B cell (primary cell): ENCODE measurements at regions of chr11 and their contacts with region 1.

Region 1: DNA sequence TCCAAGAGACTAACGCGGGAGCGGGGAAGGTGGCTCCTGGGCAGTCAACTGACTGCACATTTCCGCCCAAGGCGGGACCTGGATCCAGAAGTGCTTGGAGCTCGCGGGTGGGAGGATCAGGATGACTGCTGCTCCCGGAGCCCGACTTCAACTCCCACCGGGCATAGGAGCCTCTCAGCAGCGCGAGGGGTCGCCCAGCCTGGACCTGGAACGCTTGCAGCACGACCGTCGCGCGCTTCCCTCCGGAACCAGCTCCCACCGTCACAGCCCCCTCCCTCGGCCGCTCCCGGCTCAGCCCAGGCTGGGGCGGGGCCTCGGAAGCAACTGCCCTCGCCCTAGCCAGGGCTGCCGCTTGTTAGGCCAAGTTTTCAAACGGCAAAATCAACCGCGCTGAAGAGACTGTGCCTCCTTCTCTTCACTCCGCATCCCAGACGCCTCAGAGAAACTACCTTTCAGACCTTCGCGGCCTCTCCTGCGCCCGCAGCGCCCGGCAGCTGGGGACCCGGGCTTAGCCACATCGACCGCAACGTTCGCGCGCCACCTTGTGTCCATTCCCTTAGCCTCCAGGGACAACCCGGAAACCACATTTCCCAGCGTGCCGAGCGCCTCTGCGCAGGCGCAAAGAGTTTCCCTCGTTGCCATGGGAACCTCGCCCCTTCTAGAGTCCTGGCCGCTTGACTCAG is 14.0 kb downstream of the SSH3 start:
- DNase-seq: peak; percentile 99
- ATAC-seq: peak; percentile 83
- H3K4me3 ChIP-seq: peak overlapping the region; percentile 77 to 92 (median 87)
- H3K4me3 Mint-ChIP-seq: peak overlapping the region; percentile 89
- H3K27ac ChIP-seq: peak overlapping the region; percentile 46 to 78
- H3K27ac Mint-ChIP-seq: peak overlapping the region; percentile 97
- H3K4me1 ChIP-seq: peaks cover 22 to 33% of the 10 kb centered on the region in 2 donors
- H3K4me1 Mint-ChIP-seq: peaks cover 21% of the 10 kb centered on the region
- H3K27me3 ChIP-seq: no peaks in the 10 kb centered on the region
- H3K27me3 Mint-ChIP-seq: no peaks in the 10 kb centered on the region
- CTCF ChIP-seq: peak; percentile 81

Region 2: DNA sequence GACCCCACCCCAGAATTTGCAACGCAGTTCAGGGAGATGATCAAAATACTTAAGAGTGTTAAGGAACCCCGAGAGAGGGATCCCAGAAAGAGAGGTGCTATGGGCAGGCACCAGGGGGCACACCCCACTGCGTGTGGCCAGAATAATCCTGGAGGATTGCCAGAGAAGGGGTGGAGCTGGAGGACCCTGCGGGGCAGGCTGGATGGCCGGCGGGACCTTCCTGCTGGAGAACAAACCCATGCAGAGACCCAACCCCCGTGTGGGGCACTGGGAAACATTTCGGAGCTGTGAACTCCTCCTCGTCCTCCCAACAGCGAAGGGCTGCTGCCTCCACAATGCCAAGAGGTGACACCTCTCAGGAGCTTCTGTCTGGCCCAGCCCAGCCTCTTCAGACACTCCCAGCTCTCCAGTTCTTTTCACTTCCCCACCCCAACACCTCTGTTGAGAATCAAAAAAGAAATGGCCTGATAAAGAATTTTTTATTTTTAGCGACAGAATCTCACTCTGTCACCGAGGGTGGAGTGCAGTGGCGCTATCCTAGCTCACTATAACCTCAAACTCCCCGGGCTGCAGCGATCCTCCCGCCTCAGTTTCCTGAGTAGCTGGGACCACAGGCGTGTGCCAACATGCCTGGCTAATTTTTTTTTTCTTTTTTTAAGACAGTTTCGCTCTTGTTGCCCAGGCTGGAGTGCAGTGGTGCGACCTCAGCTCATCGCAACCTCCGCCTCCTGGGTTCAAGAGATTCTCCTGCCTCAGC is 235.1 kb before region 1 on chr11:
- CTCF ChIA-PET with region 1: interaction called, 12 read pairs
- POLR2A ChIA-PET with region 1: no interaction called
- intact Hi-C with region 1: loop called (anchors 1 kb)
- DNase-seq: peak; percentile 43
- ATAC-seq: no peak
- H3K4me3 ChIP-seq: peak overlapping the region in 1 of 5 experiments; percentile 33
- H3K4me3 Mint-ChIP-seq: peak overlapping the region; percentile 54
- H3K27ac ChIP-seq: no peak overlapping the region
- H3K27ac Mint-ChIP-seq: no peak overlapping the region
- H3K4me1 ChIP-seq: peaks cover 11 to 12% of the 10 kb centered on the region in 2 donors
- H3K4me1 Mint-ChIP-seq: peaks cover 13% of the 10 kb centered on the region
- H3K27me3 ChIP-seq: peaks cover 0 to 8% (median 2%) of the 10 kb centered on the region in 4 experiments
- H3K27me3 Mint-ChIP-seq: peaks cover 9% of the 10 kb centered on the region
- CTCF ChIP-seq: no peak

Region 3: GRCh38 chr11:67120881-67121710 is 196.2 kb before region 1 on chr11:
- CTCF ChIA-PET with region 1: no interaction called
- POLR2A ChIA-PET with region 1: no interaction called
- intact Hi-C with region 1: no loop called
- DNase-seq: peak; percentile 78
- ATAC-seq: no peak
- H3K4me3 ChIP-seq: peak overlapping the region; percentile 67 to 96 (median 88)
- H3K4me3 Mint-ChIP-seq: peak overlapping the region; percentile 95
- H3K27ac ChIP-seq: peak overlapping the region; percentile 42 to 72
- H3K27ac Mint-ChIP-seq: peak overlapping the region; percentile 89
- H3K4me1 ChIP-seq: peaks cover 13 to 29% of the 10 kb centered on the region in 2 donors
- H3K4me1 Mint-ChIP-seq: peaks cover 29% of the 10 kb centered on the region
- H3K27me3 ChIP-seq: no peaks in the 10 kb centered on the region
- H3K27me3 Mint-ChIP-seq: no peaks in the 10 kb centered on the region
- CTCF ChIP-seq: no peak

Region 4: GRCh38 chr11:67277231-67277961 is 40.0 kb before region 1 on chr11:
- CTCF ChIA-PET with region 1: interaction called, 16 read pairs
- POLR2A ChIA-PET with region 1: interaction called, 15 read pairs
- intact Hi-C with region 1: loop called (anchors 1 kb)
- DNase-seq: peak; percentile 96
- ATAC-seq: peak; percentile 95
- H3K4me3 ChIP-seq: peak overlapping the region; percentile 35 to 59 (median 50)
- H3K4me3 Mint-ChIP-seq: peak overlapping the region; percentile 84
- H3K27ac ChIP-seq: peak overlapping the region; percentile 82
- H3K27ac Mint-ChIP-seq: peak overlapping the region; percentile 95
- H3K4me1 ChIP-seq: peaks cover 82 to 86% of the 10 kb centered on the region in 2 donors
- H3K4me1 Mint-ChIP-seq: peaks cover 76% of the 10 kb centered on the region
- H3K27me3 ChIP-seq: no peaks in the 10 kb centered on the region
- H3K27me3 Mint-ChIP-seq: no peaks in the 10 kb centered on the region
- CTCF ChIP-seq: no peak

Region 5: DNA sequence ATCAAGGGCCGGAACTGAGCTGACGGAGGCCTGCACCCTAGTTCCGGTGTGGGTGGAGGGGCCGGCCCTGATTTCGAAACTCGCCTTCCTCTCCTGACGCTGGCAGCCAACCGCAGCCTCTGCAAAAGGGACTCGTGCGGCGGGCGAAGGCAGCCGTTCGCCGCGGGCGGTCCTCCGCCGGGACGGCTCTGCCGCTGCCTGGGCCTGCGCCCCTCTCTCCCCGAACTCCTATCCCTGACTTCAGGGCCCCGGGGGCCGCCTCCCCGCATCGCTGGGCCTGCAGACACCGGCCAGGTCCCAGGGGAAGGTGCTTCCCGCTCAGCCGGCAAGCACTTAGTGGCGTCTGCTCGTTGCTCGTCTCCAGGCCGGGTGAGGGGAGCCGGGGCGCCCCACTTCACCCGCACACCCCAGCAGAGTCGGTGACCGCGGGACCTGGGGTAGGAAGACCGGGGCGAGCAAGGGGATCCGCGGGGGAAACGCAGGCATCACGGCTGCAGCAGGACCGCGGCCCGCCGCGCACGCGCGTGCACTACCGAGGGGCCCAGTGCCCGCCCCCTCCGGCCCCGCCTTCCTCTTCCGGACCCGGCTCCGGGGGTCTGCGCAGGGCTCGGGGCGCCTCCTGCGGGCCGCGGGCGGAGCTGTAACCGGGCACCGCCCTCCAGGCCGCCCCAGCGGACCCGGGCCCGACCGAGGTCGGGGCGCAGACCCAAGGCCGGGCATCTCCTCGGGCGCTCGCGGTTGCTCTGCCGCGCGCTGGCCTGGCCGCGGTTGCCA is 28.7 kb before region 1 on chr11:
- CTCF ChIA-PET with region 1: interaction called, 24 read pairs
- POLR2A ChIA-PET with region 1: interaction called, 13 read pairs
- intact Hi-C with region 1: loop called (anchors 1 kb)
- DNase-seq: peak; percentile 95
- ATAC-seq: peak; percentile 76
- H3K4me3 ChIP-seq: peak overlapping the region; percentile 31 to 86 (median 79)
- H3K4me3 Mint-ChIP-seq: peak overlapping the region; percentile 76
- H3K27ac ChIP-seq: peak overlapping the region; percentile 86 to 92
- H3K27ac Mint-ChIP-seq: peak overlapping the region; percentile 97
- H3K4me1 ChIP-seq: peaks cover 44 to 55% of the 10 kb centered on the region in 2 donors
- H3K4me1 Mint-ChIP-seq: peaks cover 45% of the 10 kb centered on the region
- H3K27me3 ChIP-seq: no peaks in the 10 kb centered on the region
- H3K27me3 Mint-ChIP-seq: no peaks in the 10 kb centered on the region
- CTCF ChIP-seq: peak; percentile 61

Region 6: GRCh38 chr11:67382276-67383136 is 65.2 kb after region 1 on chr11:
- CTCF ChIA-PET with region 1: interaction called, 71 read pairs
- POLR2A ChIA-PET with region 1: interaction called, 6 read pairs
- intact Hi-C with region 1: loop called (anchors 1 kb)
- DNase-seq: peak; percentile 88
- ATAC-seq: peak; percentile 86
- H3K4me3 ChIP-seq: no peak overlapping the region
- H3K4me3 Mint-ChIP-seq: peak overlapping the region; percentile 84
- H3K27ac ChIP-seq: peak overlapping the region in 1 of 2 donors; percentile 88
- H3K27ac Mint-ChIP-seq: peak overlapping the region; percentile 92
- H3K4me1 ChIP-seq: peaks cover 22 to 33% of the 10 kb centered on the region in 2 donors
- H3K4me1 Mint-ChIP-seq: peaks cover 22% of the 10 kb centered on the region
- H3K27me3 ChIP-seq: no peaks in the 10 kb centered on the region
- H3K27me3 Mint-ChIP-seq: no peaks in the 10 kb centered on the region
- CTCF ChIP-seq: peak; percentile 96